Vagina (tissue), 2 donors: ENCODE measurements at regions of chr2 and their contacts with region 1.

Region 1: GRCh38 chr2:226984750-226985582 is 149.1 kb downstream of the RHBDD1 start:
- DNase-seq: no peak
- H3K4me3 ChIP-seq: no peak overlapping the region
- H3K27ac ChIP-seq: peak overlapping the region; percentile 67
- H3K4me1 ChIP-seq: peaks cover 16% of the 10 kb centered on the region
- H3K27me3 ChIP-seq: no peaks in the 10 kb centered on the region
- CTCF ChIP-seq: peak; percentile 29 to 83 (median 30)
- POLR2A ChIP-seq: no peak

Region 2: DNA sequence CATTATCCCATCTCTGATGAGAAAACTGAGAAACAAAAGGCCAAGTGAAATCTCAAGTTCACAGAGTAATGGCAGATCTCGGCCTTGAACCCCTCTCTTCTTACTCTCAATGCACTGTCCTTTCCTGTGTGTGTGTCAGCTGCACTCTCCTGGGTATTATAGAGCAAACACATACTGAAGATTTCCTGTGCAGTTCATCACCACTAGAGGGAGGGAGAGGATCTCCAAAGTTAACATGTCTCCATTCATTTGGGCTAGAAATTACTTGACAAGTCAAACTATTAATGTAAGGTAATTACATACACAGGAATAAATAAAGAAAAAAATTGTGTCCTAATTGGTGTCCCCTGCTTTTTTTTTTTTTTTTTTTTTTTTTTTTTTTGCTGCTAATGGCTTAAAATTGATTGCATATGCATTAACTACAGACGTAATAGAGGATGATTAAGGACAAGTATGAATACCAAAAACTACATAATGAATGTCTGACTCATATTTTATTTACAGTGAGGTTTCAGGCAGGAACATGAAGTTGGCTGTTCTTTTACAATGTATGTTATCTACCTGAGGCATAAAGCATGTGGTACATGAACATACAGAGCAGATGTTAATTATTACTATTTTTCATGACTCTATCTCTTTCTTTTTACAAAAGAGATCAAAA is 1316.2 kb before region 1 on chr2:
- intact Hi-C with region 1: loop called (anchors 5 kb)
- DNase-seq: no peak
- H3K4me3 ChIP-seq: no peak overlapping the region
- H3K27ac ChIP-seq: no peak overlapping the region
- H3K4me1 ChIP-seq: no peaks in the 10 kb centered on the region
- H3K27me3 ChIP-seq: no peaks in the 10 kb centered on the region
- CTCF ChIP-seq: peak; percentile 40 to 67 (median 55)
- POLR2A ChIP-seq: no peak

Region 3: DNA sequence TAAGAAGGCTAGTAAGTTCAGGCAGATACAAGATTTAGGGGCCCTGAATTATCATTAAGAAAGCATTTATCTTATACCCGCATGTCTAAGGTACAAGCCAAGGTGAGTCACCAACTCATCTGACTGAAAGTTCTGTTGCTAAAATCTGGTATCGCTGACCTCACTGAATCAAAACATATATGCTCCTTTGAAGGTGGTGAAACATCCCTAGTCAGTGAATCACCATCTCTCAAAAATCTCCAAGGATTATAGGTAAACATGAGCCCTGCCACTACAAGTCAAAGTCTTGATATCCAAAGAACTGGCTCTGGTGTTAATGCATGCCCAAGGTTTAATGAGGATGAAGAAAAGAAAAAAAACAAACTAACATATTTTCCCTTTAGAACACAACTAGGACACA is 228.8 kb before region 1 on chr2:
- intact Hi-C with region 1: no loop called
- DNase-seq: no peak
- H3K4me3 ChIP-seq: no peak overlapping the region
- H3K27ac ChIP-seq: peak overlapping the region; percentile 78
- H3K4me1 ChIP-seq: peaks cover 67% of the 10 kb centered on the region
- H3K27me3 ChIP-seq: no peaks in the 10 kb centered on the region
- CTCF ChIP-seq: no peak
- POLR2A ChIP-seq: no peak

Region 4: DNA sequence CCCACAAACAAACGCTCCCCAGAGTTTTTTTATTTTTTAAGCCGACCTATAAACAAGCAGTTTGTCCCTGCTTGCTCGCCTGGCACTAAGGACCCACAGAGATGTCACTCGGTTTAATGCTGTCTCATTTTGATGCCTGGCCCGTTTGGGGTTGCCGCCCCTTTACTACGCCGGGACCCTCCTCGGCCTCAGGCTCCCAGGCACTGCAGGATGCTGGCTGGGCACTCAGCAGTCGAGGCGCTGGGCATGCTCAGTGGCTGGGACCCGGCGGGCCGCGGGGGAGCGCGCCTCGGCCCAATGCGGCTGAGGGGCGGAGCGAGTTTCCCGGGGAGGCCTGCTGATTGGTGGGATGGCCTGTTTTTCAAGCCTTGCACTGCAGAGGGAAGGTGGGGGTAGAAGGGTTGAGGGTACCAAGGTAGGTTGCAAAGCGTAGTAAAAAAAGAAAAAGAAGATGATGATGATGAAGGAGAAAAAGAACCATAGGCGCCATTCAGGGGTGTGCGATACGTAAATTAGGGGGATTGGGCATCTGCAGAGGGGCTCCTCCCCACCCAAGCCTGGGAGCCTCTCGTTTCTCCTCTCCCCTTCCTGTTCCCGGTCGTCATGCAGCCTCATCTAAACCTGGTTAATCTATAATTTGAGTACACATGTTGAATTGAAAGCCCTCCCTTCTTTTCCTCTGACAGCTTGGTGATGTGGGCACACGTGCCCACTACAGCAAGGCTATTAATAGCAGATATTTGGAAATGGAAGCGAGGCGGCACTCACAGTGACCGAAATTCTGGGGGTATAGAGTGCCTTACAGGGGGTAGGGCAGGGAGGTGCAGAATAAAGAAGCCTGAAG is 183.8 kb before region 1 on chr2:
- intact Hi-C with region 1: loop called (anchors 5 kb)
- DNase-seq: peak; percentile 89 to 96
- H3K4me3 ChIP-seq: peak overlapping the region; percentile 61 to 85
- H3K27ac ChIP-seq: peak overlapping the region; percentile 95
- H3K4me1 ChIP-seq: peaks cover 41% of the 10 kb centered on the region
- H3K27me3 ChIP-seq: no peaks in the 10 kb centered on the region
- CTCF ChIP-seq: no peak
- POLR2A ChIP-seq: peak in 1 of 2 donors; percentile 52

Region 5: GRCh38 chr2:227460070-227460485 is 475.1 kb after region 1 on chr2:
- intact Hi-C with region 1: no loop called
- DNase-seq: no peak
- H3K4me3 ChIP-seq: no peak overlapping the region
- H3K27ac ChIP-seq: no peak overlapping the region
- H3K4me1 ChIP-seq: peaks cover 7% of the 10 kb centered on the region
- H3K27me3 ChIP-seq: no peaks in the 10 kb centered on the region
- CTCF ChIP-seq: no peak
- POLR2A ChIP-seq: no peak

Region 6: GRCh38 chr2:228048838-228049490 is 1064.0 kb after region 1 on chr2:
- intact Hi-C with region 1: no loop called
- DNase-seq: no peak
- H3K4me3 ChIP-seq: no peak overlapping the region
- H3K27ac ChIP-seq: no peak overlapping the region
- H3K4me1 ChIP-seq: no peaks in the 10 kb centered on the region
- H3K27me3 ChIP-seq: no peaks in the 10 kb centered on the region
- CTCF ChIP-seq: peak in 1 of 3 experiments; percentile 37
- POLR2A ChIP-seq: no peak